Right cardiac atrium (tissue), 5 donors: ENCODE measurements at regions of chr9 and their contacts with region 1.

Region 1: GRCh38 chr9:18906656-18907395 is 126.2 kb downstream of the SAXO1 start:
- DNase-seq: no peak
- ATAC-seq: peak in 1 of 2 donors; percentile 25
- H3K4me3 ChIP-seq: no peak overlapping the region
- H3K27ac ChIP-seq: no peak overlapping the region
- H3K4me1 ChIP-seq: no peaks in the 10 kb centered on the region
- H3K27me3 ChIP-seq: no peaks in the 10 kb centered on the region

Region 2: DNA sequence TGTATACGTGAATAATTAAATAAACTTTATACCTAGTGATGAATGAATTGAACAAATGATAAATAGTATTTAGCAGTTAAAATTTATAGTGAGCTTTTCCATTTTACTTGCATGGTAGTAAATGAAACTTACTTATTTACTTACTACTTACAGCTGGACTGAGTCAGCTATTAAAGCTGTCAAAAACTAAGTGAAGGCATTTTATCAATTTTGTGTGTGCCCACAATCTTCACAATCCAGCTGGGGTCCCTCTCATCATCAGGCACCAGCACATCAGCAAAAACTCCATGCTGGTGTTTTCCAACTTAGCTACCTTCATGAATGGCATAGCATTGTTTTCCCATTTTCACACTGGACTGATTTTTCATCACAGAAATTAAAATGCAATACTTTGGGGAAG is 45.1 kb after region 1 on chr9:
- intact Hi-C with region 1: loop called in 1 of 4 experiments (anchors 10 kb)
- DNase-seq: no peak
- ATAC-seq: no peak
- H3K4me3 ChIP-seq: no peak overlapping the region
- H3K27ac ChIP-seq: no peak overlapping the region
- H3K4me1 ChIP-seq: no peaks in the 10 kb centered on the region
- H3K27me3 ChIP-seq: no peaks in the 10 kb centered on the region